Activated CD8-positive, alpha-beta T cell treated with anti-CD3 and anti-CD28 coated beads, Interleukin-2, amount 10 ng/mL, durations not matched to agents 7 days and 5 days (primary cell): ENCODE measurements at regions of chr5 and their contacts with region 1.

Region 1: DNA sequence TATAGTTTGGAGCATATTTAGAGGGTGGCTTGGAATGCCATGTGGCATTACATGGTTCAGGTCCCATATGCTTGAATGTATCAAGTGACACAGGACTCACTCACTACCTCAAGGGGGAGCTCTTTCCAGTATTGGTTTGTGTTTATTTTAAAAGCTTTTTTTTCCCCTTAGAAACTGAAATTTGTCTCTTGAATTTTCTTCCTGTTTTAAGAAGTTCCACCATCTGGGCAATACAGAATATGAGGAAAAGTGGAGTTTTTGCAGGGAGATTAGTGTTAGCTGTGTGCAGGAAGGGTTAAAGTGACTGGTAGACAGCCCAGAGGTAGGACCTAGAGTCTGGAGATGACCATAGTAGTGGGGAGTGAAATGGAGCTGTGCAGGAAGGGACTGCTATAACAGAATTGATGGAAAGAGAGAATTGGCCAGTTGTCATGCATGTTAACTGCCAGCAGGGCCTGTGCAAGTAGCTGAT is 36.6 kb downstream of the CTNNA1 start:
- DNase-seq: peak; percentile 38
- ATAC-seq: peak; percentile 58
- H3K4me3 Mint-ChIP-seq: no peak overlapping the region
- H3K27ac Mint-ChIP-seq: no peak overlapping the region
- H3K4me1 Mint-ChIP-seq: peaks cover 8% of the 10 kb centered on the region
- H3K27me3 Mint-ChIP-seq: peaks cover 31% of the 10 kb centered on the region

Region 2: GRCh38 chr5:138760448-138761110 is 29.2 kb before region 1 on chr5:
- CTCF ChIA-PET with region 1: interaction called, 11 read pairs
- POLR2A ChIA-PET with region 1: no interaction called
- DNase-seq: no peak
- ATAC-seq: no peak
- H3K4me3 Mint-ChIP-seq: no peak overlapping the region
- H3K27ac Mint-ChIP-seq: no peak overlapping the region
- H3K4me1 Mint-ChIP-seq: peaks cover 24% of the 10 kb centered on the region
- H3K27me3 Mint-ChIP-seq: peaks cover 33% of the 10 kb centered on the region

Region 3: GRCh38 chr5:138809391-138809790 is 19.6 kb after region 1 on chr5:
- CTCF ChIA-PET with region 1: interaction called, 22 read pairs
- POLR2A ChIA-PET with region 1: no interaction called
- DNase-seq: no peak
- ATAC-seq: no peak
- H3K4me3 Mint-ChIP-seq: no peak overlapping the region
- H3K27ac Mint-ChIP-seq: no peak overlapping the region
- H3K4me1 Mint-ChIP-seq: peaks cover 6% of the 10 kb centered on the region
- H3K27me3 Mint-ChIP-seq: peaks cover 13% of the 10 kb centered on the region

Region 4: DNA sequence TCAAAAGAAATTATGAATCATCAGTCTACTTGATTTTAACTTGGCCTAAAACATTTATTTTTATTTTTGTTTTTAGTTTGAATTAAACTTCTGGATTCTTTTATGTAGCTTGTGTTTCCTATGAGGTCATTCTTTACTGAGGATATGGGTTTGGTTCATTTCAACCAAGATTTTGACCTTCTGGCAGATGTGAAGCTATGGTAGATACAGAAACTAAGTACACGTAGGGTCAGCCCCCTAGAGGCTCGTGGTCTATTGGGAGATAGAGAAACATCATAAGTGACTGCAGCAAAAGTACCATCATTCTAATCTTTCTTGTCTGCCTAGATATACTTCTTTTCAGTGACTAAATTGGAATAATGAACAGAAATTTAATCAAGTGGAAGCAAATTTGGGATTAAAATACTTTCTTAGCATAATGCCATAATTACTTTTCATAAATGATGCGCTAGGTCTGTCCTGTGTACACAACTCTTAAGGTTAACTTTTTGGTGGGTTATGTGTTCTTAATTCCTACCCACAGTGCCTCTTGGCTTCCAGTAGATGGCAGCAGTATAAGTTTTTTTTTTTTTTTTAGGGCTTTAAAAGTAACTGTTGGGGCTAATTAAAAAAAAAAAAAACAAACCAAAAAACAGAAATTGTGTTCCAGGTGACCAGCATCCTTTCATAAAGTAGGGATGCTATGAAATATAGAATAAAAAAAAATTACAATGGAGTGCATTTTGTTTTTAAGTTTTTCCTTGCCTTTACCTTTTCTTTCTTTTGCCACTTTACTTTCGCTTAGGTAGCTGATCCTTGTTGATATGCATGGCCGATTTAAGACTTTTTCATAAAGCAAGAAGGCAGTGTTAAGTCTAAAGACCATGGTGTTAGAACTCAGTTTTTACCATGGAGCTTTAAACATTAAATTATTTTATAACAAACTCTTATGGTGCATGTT is 35.4 kb after region 1 on chr5:
- CTCF ChIA-PET with region 1: interaction called, 17 read pairs
- POLR2A ChIA-PET with region 1: no interaction called
- DNase-seq: no peak
- ATAC-seq: peak; percentile 53
- H3K4me3 Mint-ChIP-seq: no peak overlapping the region
- H3K27ac Mint-ChIP-seq: no peak overlapping the region
- H3K4me1 Mint-ChIP-seq: peaks cover 3% of the 10 kb centered on the region
- H3K27me3 Mint-ChIP-seq: peaks cover 9% of the 10 kb centered on the region